ENCODE measurements at regions of chr1 and their contacts with region 1.

Region 1: DNA sequence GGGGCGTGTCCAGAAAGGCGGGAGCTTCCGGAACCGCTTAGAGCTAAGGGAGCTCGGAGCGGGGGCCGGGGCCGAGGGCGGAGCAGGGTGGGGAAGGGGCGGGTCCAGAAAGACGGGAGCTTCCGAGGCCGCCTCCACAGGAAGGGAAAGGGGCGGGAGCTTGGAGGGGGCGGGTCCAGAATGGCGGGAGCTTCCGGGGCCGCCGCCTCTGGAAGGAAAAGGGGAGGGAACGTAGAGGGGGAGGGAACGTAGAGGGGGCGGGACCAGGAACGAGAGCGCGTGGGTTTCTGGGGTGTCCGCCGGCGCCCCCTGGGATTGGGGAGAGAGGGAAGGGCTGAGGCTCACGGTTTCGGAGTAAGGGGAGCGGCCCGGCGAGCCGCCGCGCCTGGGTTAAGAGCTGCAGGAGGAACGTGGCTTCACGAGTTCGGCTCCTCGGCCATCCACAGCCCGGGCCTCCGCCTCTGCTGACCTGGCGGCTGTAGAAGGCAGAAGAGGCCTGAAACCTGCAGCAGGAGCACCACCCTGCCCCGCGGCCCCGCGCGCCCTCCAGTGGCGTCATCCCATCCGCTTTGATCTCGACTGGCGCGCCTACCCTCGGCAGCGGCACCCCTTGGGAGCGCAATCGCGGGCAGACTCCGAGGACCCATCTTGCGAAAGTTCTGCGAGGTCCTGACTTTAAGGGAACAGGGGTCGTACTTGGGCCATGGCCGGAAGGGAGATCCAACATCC is 22.9 kb upstream of the HPDL start:
- DNase-seq: peak; percentile 91 to 94
- H3K4me3 ChIP-seq: peak overlapping the region; percentile 63 to 76 (median 74)
- H3K27ac ChIP-seq: peak overlapping the region; percentile 93
- H3K4me1 ChIP-seq: peaks cover 13 to 24% (median 15%) of the 10 kb centered on the region in 4 experiments
- H3K27me3 ChIP-seq: no peaks in the 10 kb centered on the region
- CTCF ChIP-seq: peak; percentile 61 to 85 (median 74)
- EP300 ChIP-seq: no peak
- POLR2A ChIP-seq: peak; percentile 91 to 97
- RAD21 ChIP-seq: peak; percentile 58 to 64

Region 2: GRCh38 chr1:45246760-45247159 is 57.0 kb before region 1 on chr1:
- CTCF ChIA-PET with region 1: no interaction called
- POLR2A ChIA-PET with region 1: no interaction called
- DNase-seq: no peak
- H3K4me3 ChIP-seq: no peak overlapping the region
- H3K27ac ChIP-seq: no peak overlapping the region
- H3K4me1 ChIP-seq: no peaks in the 10 kb centered on the region
- H3K27me3 ChIP-seq: no peaks in the 10 kb centered on the region
- CTCF ChIP-seq: no peak
- EP300 ChIP-seq: no peak
- POLR2A ChIP-seq: no peak
- RAD21 ChIP-seq: no peak

Region 3: DNA sequence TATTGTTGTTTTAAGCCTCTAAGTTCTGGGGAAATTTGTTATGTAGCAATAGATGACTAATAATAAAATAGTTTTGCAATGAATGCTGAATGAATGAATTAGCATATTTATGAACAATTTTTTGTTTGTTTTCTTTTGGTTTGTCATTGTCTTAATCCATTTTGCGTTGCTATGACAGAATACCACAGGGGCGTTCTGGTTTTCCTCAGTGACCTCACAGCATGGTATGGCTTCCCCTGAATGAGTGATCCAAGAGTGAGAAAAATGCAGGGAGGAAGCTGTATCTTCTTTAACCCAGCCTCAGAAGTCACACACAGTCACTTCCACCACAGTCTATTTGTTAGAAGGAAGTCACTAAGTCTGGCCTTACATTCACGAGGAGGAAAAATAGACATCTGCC is 30.8 kb before region 1 on chr1:
- CTCF ChIA-PET with region 1: interaction called, 10 read pairs
- POLR2A ChIA-PET with region 1: no interaction called
- DNase-seq: no peak
- H3K4me3 ChIP-seq: no peak overlapping the region
- H3K27ac ChIP-seq: no peak overlapping the region
- H3K4me1 ChIP-seq: peaks cover 0 to 4% (median 4%) of the 10 kb centered on the region in 4 experiments; a peak in 2 of 7 replicates
- H3K27me3 ChIP-seq: no peaks in the 10 kb centered on the region
- CTCF ChIP-seq: no peak
- EP300 ChIP-seq: no peak
- POLR2A ChIP-seq: no peak
- RAD21 ChIP-seq: no peak

Region 4: DNA sequence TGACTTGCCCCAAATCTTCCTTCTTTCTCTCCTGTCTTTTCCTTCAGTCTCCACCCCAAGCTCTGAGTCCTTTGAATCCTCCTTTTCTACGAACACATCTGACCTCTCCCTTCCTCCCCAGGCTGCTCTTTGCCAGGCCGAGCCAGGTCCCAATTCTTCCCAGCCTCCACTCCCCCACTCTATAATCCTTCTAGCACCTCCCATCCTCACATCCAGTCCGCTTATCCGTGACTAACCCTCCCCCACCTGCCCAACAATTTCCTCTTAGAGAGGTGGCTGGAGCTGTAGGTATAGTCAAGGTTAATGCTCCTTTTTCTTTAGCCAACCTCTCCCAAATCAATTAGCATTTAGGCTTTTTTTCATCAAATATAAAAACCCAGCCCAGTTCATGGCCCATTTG is 13.4 kb after region 1 on chr1:
- CTCF ChIA-PET with region 1: interaction called, 8 read pairs
- POLR2A ChIA-PET with region 1: interaction called, 194 read pairs
- DNase-seq: no peak
- H3K4me3 ChIP-seq: no peak overlapping the region
- H3K27ac ChIP-seq: no peak overlapping the region
- H3K4me1 ChIP-seq: peaks cover 3 to 14% (median 6%) of the 10 kb centered on the region in 4 experiments; a peak in 6 of 7 replicates
- H3K27me3 ChIP-seq: no peaks in the 10 kb centered on the region
- CTCF ChIP-seq: no peak
- EP300 ChIP-seq: no peak
- POLR2A ChIP-seq: no peak
- RAD21 ChIP-seq: no peak

Region 5: GRCh38 chr1:45339789-45340570 is 36.2 kb after region 1 on chr1 and contains the starts of genes MUTYH and TOE1:
- CTCF ChIA-PET with region 1: interaction called, 5 read pairs
- POLR2A ChIA-PET with region 1: interaction called, 50 read pairs
- DNase-seq: peak; percentile 88 to 95
- H3K4me3 ChIP-seq: peak within 1 kb of the TSS; percentile 84 to 97 (median 92)
- H3K27ac ChIP-seq: peak within 1 kb of the TSS; percentile 97
- H3K4me1 ChIP-seq: peaks cover 0 to 9% (median 6%) of the 10 kb centered on the region in 4 experiments; a peak in 6 of 7 replicates
- H3K27me3 ChIP-seq: no peaks in the 10 kb centered on the region
- CTCF ChIP-seq: no peak
- EP300 ChIP-seq: no peak
- POLR2A ChIP-seq: peak; percentile 94 to 96
- RAD21 ChIP-seq: no peak
- total RNA-seq, gene MUTYH: 51.9 TPM in 2 replicates
- total RNA-seq, gene TOE1: 14.5 and 15.2 TPM in 2 replicates

Region 6: GRCh38 chr1:45370575-45370974 is 66.8 kb after region 1 on chr1:
- CTCF ChIA-PET with region 1: no interaction called
- POLR2A ChIA-PET with region 1: no interaction called
- DNase-seq: no peak
- H3K4me3 ChIP-seq: no peak overlapping the region
- H3K27ac ChIP-seq: no peak overlapping the region
- H3K4me1 ChIP-seq: no peaks in the 10 kb centered on the region
- H3K27me3 ChIP-seq: no peaks in the 10 kb centered on the region
- CTCF ChIP-seq: no peak
- EP300 ChIP-seq: no peak
- POLR2A ChIP-seq: no peak
- RAD21 ChIP-seq: no peak